ENCODE measurements at regions of chr10 and their contacts with region 1.

Region 1: DNA sequence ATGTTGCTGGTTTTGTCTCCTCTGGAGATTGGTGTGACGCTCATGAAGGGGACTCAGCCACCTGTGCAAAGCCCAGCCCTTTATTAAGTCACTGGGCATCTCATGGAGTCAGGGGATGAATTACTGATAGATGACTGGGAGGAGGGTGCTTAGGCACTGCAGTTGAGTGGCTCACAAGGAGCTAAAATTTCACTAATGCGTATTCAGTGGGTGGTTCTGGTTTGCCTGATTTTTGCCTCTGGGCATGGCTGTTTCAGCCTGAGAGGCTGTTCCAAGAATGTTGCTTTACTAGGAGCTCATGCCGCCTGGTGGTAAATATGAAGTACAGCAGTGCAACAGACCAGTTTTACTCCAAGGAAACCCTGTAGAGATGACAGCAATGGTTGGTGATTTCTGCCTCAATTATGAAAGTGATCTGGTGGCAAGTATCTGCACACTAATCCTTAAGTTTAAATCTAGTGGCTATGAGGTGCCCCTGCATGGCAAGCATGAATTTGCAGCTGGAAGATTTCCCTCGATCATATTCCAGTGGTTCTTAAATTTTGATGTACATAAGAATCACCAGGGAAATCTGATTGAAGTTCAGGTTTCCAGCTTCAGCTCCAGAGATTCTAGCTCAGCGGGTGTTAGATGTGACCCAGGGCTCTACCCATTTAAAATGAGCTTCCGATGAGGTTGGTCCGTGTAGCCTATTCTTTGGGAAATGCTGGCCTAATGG is 19.9 kb downstream of the ACTA2 start:
- DNase-seq: peak; percentile 62
- H3K4me3 ChIP-seq: no peak overlapping the region
- H3K27ac ChIP-seq: peak overlapping the region; percentile 49
- H3K27me3 ChIP-seq: no peaks in the 10 kb centered on the region
- CTCF ChIP-seq: peak; percentile 95

Region 2: GRCh38 chr10:88843171-88843570 is 89.5 kb before region 1 on chr10:
- CTCF ChIA-PET with region 1: interaction called, 467 read pairs
- POLR2A ChIA-PET with region 1: interaction called, 4 read pairs
- DNase-seq: no peak
- H3K4me3 ChIP-seq: no peak overlapping the region
- H3K27ac ChIP-seq: no peak overlapping the region
- H3K27me3 ChIP-seq: no peaks in the 10 kb centered on the region
- CTCF ChIP-seq: no peak

Region 3: GRCh38 chr10:88880282-88881076 is 52.2 kb before region 1 on chr10:
- CTCF ChIA-PET with region 1: interaction called, 44 read pairs
- POLR2A ChIA-PET with region 1: interaction called, 11 read pairs
- DNase-seq: no peak
- H3K4me3 ChIP-seq: peak overlapping the region; percentile 85
- H3K27ac ChIP-seq: peak overlapping the region; percentile 88
- H3K27me3 ChIP-seq: no peaks in the 10 kb centered on the region
- CTCF ChIP-seq: 0 out of 2 replicates have a peak, but pooled peaks have one; percentile 26

Region 4: GRCh38 chr10:88908194-88908593 is 24.5 kb before region 1 on chr10:
- CTCF ChIA-PET with region 1: interaction called, 18 read pairs
- POLR2A ChIA-PET with region 1: no interaction called
- DNase-seq: no peak
- H3K4me3 ChIP-seq: no peak overlapping the region
- H3K27ac ChIP-seq: no peak overlapping the region
- H3K27me3 ChIP-seq: no peaks in the 10 kb centered on the region
- CTCF ChIP-seq: no peak

Region 5: DNA sequence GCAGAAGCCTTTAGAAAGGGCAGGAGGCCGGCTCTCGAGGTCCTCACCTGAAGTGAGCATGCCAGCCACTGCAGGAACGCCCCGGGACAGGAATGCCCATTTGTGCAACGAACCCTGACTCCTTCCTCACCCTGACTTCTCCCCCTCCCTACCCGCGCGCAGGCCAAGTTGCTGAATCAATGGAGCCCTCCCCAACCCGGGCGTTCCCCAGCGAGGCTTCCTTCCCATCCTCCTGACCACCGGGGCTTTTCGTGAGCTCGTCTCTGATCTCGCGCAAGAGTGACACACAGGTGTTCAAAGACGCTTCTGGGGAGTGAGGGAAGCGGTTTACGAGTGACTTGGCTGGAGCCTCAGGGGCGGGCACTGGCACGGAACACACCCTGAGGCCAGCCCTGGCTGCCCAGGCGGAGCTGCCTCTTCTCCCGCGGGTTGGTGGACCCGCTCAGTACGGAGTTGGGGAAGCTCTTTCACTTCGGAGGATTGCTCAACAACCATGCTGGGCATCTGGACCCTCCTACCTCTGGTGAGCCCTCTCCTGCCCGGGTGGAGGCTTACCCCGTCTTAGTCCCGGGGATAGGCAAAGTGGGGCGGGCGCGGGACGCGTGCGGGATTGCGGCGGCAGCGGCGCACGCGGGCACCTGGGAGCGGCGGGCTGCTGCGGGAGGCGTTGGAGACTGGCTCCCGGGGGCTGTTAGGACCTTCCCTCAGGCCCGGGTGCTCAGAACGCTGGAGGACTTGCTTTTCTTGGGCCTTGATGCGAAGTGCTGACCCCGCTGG is 57.9 kb after region 1 on chr10 and contains the start of gene FAS:
- CTCF ChIA-PET with region 1: interaction called, 244 read pairs
- POLR2A ChIA-PET with region 1: interaction called, 17 read pairs
- DNase-seq: no peak
- H3K4me3 ChIP-seq: peak within 1 kb of the TSS; percentile 89
- H3K27ac ChIP-seq: peak within 1 kb of the TSS; percentile 84
- H3K27me3 ChIP-seq: no peaks in the 10 kb centered on the region
- CTCF ChIP-seq: no peak
- polyA plus RNA-seq, gene FAS: 67.0 and 78.4 TPM in 2 replicates

Measured in AG04450 (cell line).